ENCODE measurements at regions of chr2 and their contacts with region 1.

Region 1: DNA sequence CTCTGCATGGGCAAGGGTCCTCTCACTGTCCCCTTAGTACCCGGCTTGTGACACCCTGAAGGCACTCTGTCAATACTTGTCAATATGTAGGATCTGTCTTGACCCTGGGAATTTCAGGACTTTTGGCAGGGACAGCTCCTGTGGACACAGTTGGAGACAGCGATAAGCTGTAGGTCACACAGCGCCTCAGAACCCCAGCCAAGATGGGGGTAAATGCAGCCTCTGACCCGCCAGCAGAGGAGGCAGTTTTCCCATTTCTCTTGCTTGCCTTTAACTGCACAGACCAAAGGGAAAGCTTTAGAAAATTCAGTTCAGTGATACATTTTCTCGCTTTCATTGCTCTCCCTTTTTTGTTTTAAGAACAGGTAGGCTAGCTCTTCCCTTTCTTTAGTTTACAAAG is 54.8 kb upstream of the KLHL29 start:
- DNase-seq: peak; percentile 40
- H3K4me3 ChIP-seq: no peak overlapping the region
- H3K27ac ChIP-seq: no peak overlapping the region
- H3K4me1 ChIP-seq: no peaks in the 10 kb centered on the region
- H3K27me3 ChIP-seq: peaks cover 16% of the 10 kb centered on the region
- CTCF ChIP-seq: peak; percentile 46

Region 2: DNA sequence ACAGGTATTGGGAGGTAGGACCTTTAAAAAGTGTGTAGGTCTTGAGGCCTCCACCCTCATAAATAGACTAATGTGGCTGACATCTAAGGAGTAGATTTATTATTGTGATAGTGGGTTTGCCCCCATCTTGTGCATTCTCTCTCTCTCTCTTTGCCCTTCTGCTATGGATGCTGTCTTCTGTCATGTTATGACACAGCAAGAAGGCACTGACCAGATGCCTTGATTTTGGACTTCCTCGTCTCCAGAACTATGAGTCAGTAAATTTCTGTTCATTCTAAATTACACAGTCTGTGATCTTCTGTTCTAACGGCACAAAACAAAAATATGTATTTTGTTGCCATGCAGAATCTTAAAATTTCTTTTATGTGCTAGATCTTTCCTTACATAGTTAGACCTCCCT is 529.8 kb after region 1 on chr2:
- CTCF ChIA-PET with region 1: no interaction called
- POLR2A ChIA-PET with region 1: interaction called, 15 read pairs
- intact Hi-C with region 1: no loop called
- DNase-seq: no peak
- H3K4me3 ChIP-seq: no peak overlapping the region
- H3K27ac ChIP-seq: no peak overlapping the region
- H3K4me1 ChIP-seq: no peaks in the 10 kb centered on the region
- H3K27me3 ChIP-seq: no peaks in the 10 kb centered on the region
- CTCF ChIP-seq: no peak

Measured in A673 (cell line).